Tibial artery (tissue), 4 donors: ENCODE measurements at regions of chr2 and their contacts with region 1.

Region 1: GRCh38 chr2:96907115-96908041 is 37.5 kb upstream of the SEMA4C start:
- DNase-seq: peak; percentile 92 to 98
- H3K4me3 ChIP-seq: peak overlapping the region; percentile 42 to 43
- H3K27ac ChIP-seq: peak overlapping the region; percentile 87 to 97
- H3K4me1 ChIP-seq: peaks cover 7 to 55% (median 32%) of the 10 kb centered on the region in 4 donors
- H3K27me3 ChIP-seq: no peaks in the 10 kb centered on the region
- CTCF ChIP-seq: peak in 1 of 2 experiments; percentile 29

Region 2: GRCh38 chr2:96554293-96555145 is 352.9 kb before region 1 on chr2:
- intact Hi-C with region 1: no loop called
- DNase-seq: peak; percentile 58 to 89
- H3K4me3 ChIP-seq: peak overlapping the region; percentile 0 to 10
- H3K27ac ChIP-seq: peak overlapping the region in 1 of 2 donors; percentile 62
- H3K4me1 ChIP-seq: peaks cover 0 to 18% (median 12%) of the 10 kb centered on the region in 4 donors
- H3K27me3 ChIP-seq: no peaks in the 10 kb centered on the region
- CTCF ChIP-seq: peak; percentile 97 to 98

Region 3: GRCh38 chr2:96888072-96889011 is 19.0 kb before region 1 on chr2:
- intact Hi-C with region 1: loop called (anchors 2 kb)
- DNase-seq: peak; percentile 58 to 83
- H3K4me3 ChIP-seq: peak overlapping the region in 1 of 2 donors; percentile 13
- H3K27ac ChIP-seq: peak overlapping the region; percentile 72 to 79
- H3K4me1 ChIP-seq: peaks cover 4 to 64% (median 52%) of the 10 kb centered on the region in 4 donors
- H3K27me3 ChIP-seq: no peaks in the 10 kb centered on the region
- CTCF ChIP-seq: no peak